Activated CD8-positive, alpha-beta T cell treated with anti-CD3 and anti-CD28 coated beads, Interleukin-2, amount 10 ng/mL, durations not matched to agents 7 days and 5 days (primary cell): ENCODE measurements at regions of chr7 and their contacts with region 1.

Region 1: GRCh38 chr7:17298207-17298839 is at the start of gene AHR:
- DNase-seq: peak; percentile 95
- ATAC-seq: peak; percentile 82
- H3K4me3 Mint-ChIP-seq: peak within 1 kb of the TSS; percentile 94
- H3K27ac Mint-ChIP-seq: peak within 1 kb of the TSS; percentile 96
- H3K4me1 Mint-ChIP-seq: peaks cover 23% of the 10 kb centered on the region
- H3K27me3 Mint-ChIP-seq: no peaks in the 10 kb centered on the region
- total RNA-seq, gene AHR: 39.0 to 43.7 TPM

Region 2: GRCh38 chr7:17009007-17009719 is 289.2 kb before region 1 on chr7:
- CTCF ChIA-PET with region 1: interaction called, 13 read pairs
- POLR2A ChIA-PET with region 1: no interaction called
- DNase-seq: no peak
- ATAC-seq: no peak
- H3K4me3 Mint-ChIP-seq: no peak overlapping the region
- H3K27ac Mint-ChIP-seq: no peak overlapping the region
- H3K4me1 Mint-ChIP-seq: peaks cover 35% of the 10 kb centered on the region
- H3K27me3 Mint-ChIP-seq: no peaks in the 10 kb centered on the region

Region 3: GRCh38 chr7:17139081-17139480 is 159.2 kb before region 1 on chr7:
- CTCF ChIA-PET with region 1: no interaction called
- POLR2A ChIA-PET with region 1: interaction called, 13 read pairs
- DNase-seq: no peak
- ATAC-seq: peak; percentile 86
- H3K4me3 Mint-ChIP-seq: peak overlapping the region; percentile 54
- H3K27ac Mint-ChIP-seq: peak overlapping the region; percentile 91
- H3K4me1 Mint-ChIP-seq: peaks cover 76% of the 10 kb centered on the region
- H3K27me3 Mint-ChIP-seq: no peaks in the 10 kb centered on the region

Region 4: DNA sequence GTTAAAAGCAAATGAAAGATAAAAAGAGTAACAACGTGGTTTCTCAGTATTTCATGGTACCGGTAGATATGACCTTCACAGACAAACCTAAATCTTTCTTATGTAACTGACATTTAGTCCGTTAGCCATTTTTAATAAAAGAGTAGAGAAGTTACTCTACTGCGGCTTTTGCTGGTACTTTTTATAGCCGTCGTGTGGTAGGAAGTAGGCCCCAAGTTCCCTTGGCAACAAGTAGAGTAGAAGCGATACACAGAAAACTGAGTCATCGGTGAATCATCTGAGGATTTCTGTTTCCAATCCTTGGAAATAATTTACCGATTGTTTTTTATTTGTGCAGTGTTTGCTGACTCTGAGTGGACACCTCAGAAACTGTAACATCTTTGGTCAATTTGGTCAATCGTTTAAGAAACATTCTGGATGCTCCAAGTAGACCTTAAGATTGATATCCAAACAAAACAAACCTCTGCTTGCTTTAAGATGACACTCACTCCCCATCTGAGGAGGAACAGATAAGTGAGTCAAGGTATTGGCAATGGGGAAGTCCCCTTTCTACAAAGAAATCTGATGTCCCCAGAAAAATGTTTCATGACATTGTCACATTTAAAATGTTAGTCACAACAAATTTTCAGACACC is 63.8 kb before region 1 on chr7:
- CTCF ChIA-PET with region 1: interaction called, 6 read pairs
- POLR2A ChIA-PET with region 1: interaction called, 16 read pairs
- DNase-seq: peak; percentile 85
- ATAC-seq: peak; percentile 89
- H3K4me3 Mint-ChIP-seq: peak overlapping the region; percentile 71
- H3K27ac Mint-ChIP-seq: peak overlapping the region; percentile 98
- H3K4me1 Mint-ChIP-seq: peaks cover 49% of the 10 kb centered on the region
- H3K27me3 Mint-ChIP-seq: no peaks in the 10 kb centered on the region

Region 5: GRCh38 chr7:17275749-17276671 is 22.3 kb before region 1 on chr7:
- CTCF ChIA-PET with region 1: interaction called, 13 read pairs
- POLR2A ChIA-PET with region 1: interaction called, 4 read pairs
- DNase-seq: no peak
- ATAC-seq: no peak
- H3K4me3 Mint-ChIP-seq: no peak overlapping the region
- H3K27ac Mint-ChIP-seq: no peak overlapping the region
- H3K4me1 Mint-ChIP-seq: peaks cover 24% of the 10 kb centered on the region
- H3K27me3 Mint-ChIP-seq: no peaks in the 10 kb centered on the region